Right ventricle myocardium inferior (tissue), 1 donor: ENCODE measurements at regions of chr11 and their contacts with region 1.

Region 1: GRCh38 chr11:115504276-115505158 is at the start of gene CADM1:
- DNase-seq: peak; percentile 93
- ATAC-seq: peak; percentile 95
- total RNA-seq, gene CADM1: 42.4 TPM

Region 2: DNA sequence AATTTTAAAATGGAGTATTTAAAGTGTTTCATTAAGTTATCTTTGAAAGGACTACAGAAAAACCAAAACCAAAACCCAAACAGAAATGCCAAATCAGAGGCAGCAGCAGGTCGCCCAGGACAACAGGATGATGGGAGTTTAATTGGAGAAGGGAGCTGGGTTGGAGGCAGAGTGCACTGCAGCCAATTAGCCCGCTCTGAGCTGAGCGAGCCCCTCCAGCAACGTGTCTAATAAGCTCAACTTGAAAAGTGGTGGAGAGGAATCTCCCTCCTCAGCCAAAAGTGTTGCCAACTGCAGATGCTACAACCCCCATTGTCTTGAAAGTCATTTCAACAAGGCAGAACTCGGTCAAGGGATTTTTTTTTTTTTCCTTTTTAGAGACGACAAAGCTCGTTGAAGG is 324.2 kb before region 1 on chr11:
- intact Hi-C with region 1: loop called (anchors 10 kb)
- DNase-seq: no peak
- ATAC-seq: no peak

Region 3: GRCh38 chr11:115334932-115335788 is 169.4 kb before region 1 on chr11:
- intact Hi-C with region 1: loop called (anchors 1 kb)
- DNase-seq: no peak
- ATAC-seq: no peak

Region 4: DNA sequence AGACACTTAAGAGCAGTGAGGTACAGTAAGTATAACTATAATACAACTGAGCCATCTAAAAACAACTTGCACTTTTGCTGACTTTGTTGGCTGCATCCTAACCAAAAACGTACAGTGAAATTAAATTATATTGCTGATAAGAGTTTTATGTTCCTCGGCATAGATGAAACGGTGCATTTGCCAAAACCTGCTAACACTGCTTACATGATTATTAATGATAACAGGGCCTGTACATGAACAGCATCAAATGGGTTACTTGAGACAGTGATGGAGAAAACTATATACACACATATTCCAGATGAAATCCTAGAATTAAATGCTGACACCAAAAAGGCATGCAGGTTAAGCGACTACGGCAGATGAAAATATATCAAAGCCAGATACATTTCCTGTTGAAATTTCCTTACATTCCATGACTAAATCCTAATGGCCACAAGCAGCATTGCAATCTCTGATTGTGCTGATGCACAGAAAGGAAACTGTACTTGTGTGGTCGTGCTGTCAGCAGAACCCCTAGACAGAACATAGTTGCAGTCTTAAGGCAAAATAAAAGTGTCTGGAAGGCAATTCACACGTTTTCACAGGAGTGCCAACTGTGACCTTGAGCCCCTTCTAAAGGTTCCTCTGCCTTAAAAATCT is 144.2 kb before region 1 on chr11:
- intact Hi-C with region 1: loop called (anchors 10 kb)
- DNase-seq: no peak
- ATAC-seq: no peak

Region 5: GRCh38 chr11:115607621-115608221 is 103.2 kb after region 1 on chr11:
- intact Hi-C with region 1: loop called (anchors 2 kb)
- DNase-seq: peak; percentile 72
- ATAC-seq: peak; percentile 83

Region 6: GRCh38 chr11:115678942-115679341 is 174.4 kb after region 1 on chr11:
- intact Hi-C with region 1: loop called (anchors 5 kb)
- DNase-seq: no peak
- ATAC-seq: peak; percentile 69

Region 7: GRCh38 chr11:115759622-115760460 is 255.3 kb after region 1 on chr11:
- intact Hi-C with region 1: loop called (anchors 10 kb)
- DNase-seq: peak; percentile 73
- ATAC-seq: peak; percentile 67